CD8-positive, alpha-beta T cell (primary cell): ENCODE measurements at regions of chrX and their contacts with region 1.

Region 1: DNA sequence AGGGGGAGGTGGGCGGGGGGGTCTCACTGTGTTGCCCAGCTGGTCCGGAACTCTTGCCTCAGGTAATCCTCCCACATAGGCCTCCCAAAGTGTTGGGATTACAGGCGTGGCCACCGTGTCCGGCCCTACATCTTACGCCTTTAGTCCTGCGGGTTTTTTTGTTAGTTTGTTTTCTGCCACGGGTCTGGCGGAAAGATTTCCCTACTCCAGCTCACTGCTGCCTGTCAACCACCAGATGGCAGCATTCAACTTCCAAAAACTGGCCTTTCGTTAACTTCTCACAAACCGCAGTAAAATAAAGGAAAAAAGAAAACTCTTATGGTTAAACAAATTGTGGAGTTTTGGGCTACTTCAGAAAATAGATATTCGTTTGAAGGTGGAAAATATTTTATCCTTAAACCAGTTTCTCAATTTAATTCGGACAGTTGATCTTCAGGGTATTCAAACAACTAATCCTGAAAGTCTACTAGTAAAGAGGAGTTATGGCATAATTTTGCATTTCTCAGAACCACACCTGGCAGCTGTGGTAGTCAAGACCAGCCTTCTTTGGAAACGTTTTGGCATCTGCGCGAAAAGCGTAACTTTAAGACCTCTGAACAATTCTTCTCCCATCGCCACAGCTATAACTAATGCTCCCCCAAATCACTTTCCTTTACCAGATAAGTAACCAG is 41.1 kb downstream of the LUZP4 start:
- DNase-seq: peak in 3 of 9 experiments; percentile 11 to 38 (median 13)
- ATAC-seq: no peak
- H3K4me3 ChIP-seq: no peak overlapping the region
- H3K4me3 Mint-ChIP-seq: no peak overlapping the region
- H3K27ac ChIP-seq: no peak overlapping the region
- H3K27ac Mint-ChIP-seq: no peak overlapping the region
- H3K4me1 ChIP-seq: no peaks in the 10 kb centered on the region
- H3K4me1 Mint-ChIP-seq: no peaks in the 10 kb centered on the region
- H3K27me3 ChIP-seq: no peaks in the 10 kb centered on the region
- H3K27me3 Mint-ChIP-seq: no peaks in the 10 kb centered on the region
- CTCF ChIP-seq: peak; percentile 38

Region 2: DNA sequence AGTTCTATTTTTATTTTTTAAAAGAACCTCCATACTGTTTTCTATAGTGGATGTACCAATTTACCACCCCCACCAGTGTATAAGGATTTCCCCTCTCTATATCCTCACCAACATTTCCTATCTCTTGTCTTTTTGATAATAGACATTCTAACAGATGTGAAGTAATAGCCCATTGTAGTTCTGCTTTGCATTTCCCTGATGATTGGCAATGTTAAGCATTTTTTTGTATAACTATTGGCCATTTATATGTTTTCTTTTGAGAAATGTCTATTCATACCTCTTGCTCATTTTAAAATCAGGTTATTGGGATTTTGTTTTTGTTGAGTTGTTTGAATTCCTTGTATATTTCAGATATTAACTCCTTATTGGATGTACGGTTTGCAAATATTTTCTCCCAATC is 997.9 kb before region 1 on chrX:
- CTCF ChIA-PET with region 1: no interaction called
- POLR2A ChIA-PET with region 1: no interaction called
- intact Hi-C with region 1: no loop called
- DNase-seq: no peak
- ATAC-seq: no peak
- H3K4me3 ChIP-seq: no peak overlapping the region
- H3K4me3 Mint-ChIP-seq: no peak overlapping the region
- H3K27ac ChIP-seq: no peak overlapping the region
- H3K27ac Mint-ChIP-seq: no peak overlapping the region
- H3K4me1 ChIP-seq: no peaks in the 10 kb centered on the region
- H3K4me1 Mint-ChIP-seq: no peaks in the 10 kb centered on the region
- H3K27me3 ChIP-seq: no peaks in the 10 kb centered on the region
- H3K27me3 Mint-ChIP-seq: no peaks in the 10 kb centered on the region
- CTCF ChIP-seq: no peak

Region 3: DNA sequence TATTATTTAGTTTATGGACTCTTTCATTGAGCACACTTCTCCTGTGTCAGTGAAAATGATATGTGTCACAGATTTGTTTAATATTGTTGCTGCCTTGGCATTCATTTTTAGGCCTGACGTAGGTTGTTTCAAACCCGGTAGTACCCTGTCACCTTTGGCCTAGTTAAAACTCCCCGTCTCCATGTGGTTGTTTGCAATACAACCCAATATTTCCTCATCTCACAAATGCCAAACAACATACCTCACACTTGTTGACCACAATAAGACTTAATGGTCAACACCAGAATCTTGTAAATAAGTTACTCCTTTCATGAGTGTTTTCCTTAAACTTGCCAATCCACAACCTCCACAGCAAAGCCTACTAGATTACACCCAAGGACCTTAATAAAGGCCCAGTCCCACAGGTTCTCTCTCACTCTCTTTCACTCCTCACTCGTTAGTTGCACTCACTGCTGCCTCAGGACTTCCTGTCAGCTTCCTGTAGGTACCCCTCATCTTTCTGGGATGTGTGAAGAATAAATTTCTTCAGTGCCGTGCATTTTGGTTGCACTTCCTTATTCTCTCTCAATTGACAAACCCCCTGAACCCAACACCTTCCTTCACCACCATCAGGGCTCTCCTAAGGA is 344.6 kb before region 1 on chrX:
- CTCF ChIA-PET with region 1: no interaction called
- POLR2A ChIA-PET with region 1: no interaction called
- intact Hi-C with region 1: no loop called
- DNase-seq: peak in 1 of 9 experiments; percentile 0
- ATAC-seq: no peak
- H3K4me3 ChIP-seq: no peak overlapping the region
- H3K4me3 Mint-ChIP-seq: no peak overlapping the region
- H3K27ac ChIP-seq: no peak overlapping the region
- H3K27ac Mint-ChIP-seq: no peak overlapping the region
- H3K4me1 ChIP-seq: no peaks in the 10 kb centered on the region
- H3K4me1 Mint-ChIP-seq: no peaks in the 10 kb centered on the region
- H3K27me3 ChIP-seq: no peaks in the 10 kb centered on the region
- H3K27me3 Mint-ChIP-seq: no peaks in the 10 kb centered on the region
- CTCF ChIP-seq: no peak

Region 4: DNA sequence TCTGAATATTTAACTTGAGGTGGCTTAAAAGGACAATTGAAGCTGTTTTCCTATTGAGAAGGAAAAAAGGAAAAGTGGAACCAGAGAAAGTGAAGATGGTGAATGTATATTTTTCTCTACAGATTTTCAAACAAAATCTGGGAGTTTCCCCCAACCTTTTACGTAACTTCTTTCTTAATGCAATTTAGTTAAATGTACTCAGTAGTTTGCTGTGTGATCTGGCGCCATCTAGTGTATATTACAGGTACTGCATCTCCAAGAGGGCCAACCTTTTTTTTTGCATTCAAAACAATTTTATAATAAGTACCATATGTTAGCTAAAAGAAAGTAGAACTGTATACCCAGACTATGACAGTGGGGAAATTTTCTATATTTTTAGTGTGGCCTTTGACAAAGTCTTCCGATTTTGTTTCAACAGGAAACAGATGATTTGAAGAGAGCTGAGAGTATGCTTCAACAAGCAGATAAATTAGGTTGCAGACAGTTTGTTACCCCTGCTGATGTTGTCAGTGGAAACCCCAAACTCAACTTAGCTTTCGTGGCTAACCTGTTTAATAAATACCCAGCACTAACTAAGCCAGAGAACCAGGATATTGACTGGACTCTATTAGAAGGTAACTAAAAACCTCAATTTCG is 312.4 kb after region 1 on chrX:
- CTCF ChIA-PET with region 1: interaction called, 4 read pairs
- POLR2A ChIA-PET with region 1: no interaction called
- intact Hi-C with region 1: loop called in 1 of 2 experiments (anchors 1 kb)
- DNase-seq: peak in 5 of 9 experiments; percentile 0 to 49 (median 33)
- ATAC-seq: no peak
- H3K4me3 ChIP-seq: no peak overlapping the region
- H3K4me3 Mint-ChIP-seq: no peak overlapping the region
- H3K27ac ChIP-seq: no peak overlapping the region
- H3K27ac Mint-ChIP-seq: no peak overlapping the region
- H3K4me1 ChIP-seq: no peaks in the 10 kb centered on the region
- H3K4me1 Mint-ChIP-seq: no peaks in the 10 kb centered on the region
- H3K27me3 ChIP-seq: no peaks in the 10 kb centered on the region
- H3K27me3 Mint-ChIP-seq: no peaks in the 10 kb centered on the region
- CTCF ChIP-seq: peak; percentile 96